Mammary epithelial cell (primary cell): ENCODE measurements at regions of chr19 and their contacts with region 1.

Region 1: GRCh38 chr19:47210689-47211316 is 20.2 kb downstream of the BBC3 start:
- DNase-seq: peak; percentile 54
- H3K4me3 ChIP-seq: no peak overlapping the region
- H3K27ac ChIP-seq: peak overlapping the region; percentile 45
- H3K4me1 ChIP-seq: no peaks in the 10 kb centered on the region
- H3K27me3 ChIP-seq: no peaks in the 10 kb centered on the region
- CTCF ChIP-seq: peak; percentile 82 to 84

Region 2: GRCh38 chr19:47081111-47081510 is 129.7 kb before region 1 on chr19:
- CTCF ChIA-PET with region 1: no interaction called
- dilution Hi-C with region 1: loop called (anchors 5 kb)
- in situ Hi-C with region 1: no loop called
- intact Hi-C with region 1: no loop called
- DNase-seq: no peak
- H3K4me3 ChIP-seq: no peak overlapping the region
- H3K27ac ChIP-seq: no peak overlapping the region
- H3K4me1 ChIP-seq: peaks cover 2% of the 10 kb centered on the region
- H3K27me3 ChIP-seq: no peaks in the 10 kb centered on the region
- CTCF ChIP-seq: no peak

Region 3: DNA sequence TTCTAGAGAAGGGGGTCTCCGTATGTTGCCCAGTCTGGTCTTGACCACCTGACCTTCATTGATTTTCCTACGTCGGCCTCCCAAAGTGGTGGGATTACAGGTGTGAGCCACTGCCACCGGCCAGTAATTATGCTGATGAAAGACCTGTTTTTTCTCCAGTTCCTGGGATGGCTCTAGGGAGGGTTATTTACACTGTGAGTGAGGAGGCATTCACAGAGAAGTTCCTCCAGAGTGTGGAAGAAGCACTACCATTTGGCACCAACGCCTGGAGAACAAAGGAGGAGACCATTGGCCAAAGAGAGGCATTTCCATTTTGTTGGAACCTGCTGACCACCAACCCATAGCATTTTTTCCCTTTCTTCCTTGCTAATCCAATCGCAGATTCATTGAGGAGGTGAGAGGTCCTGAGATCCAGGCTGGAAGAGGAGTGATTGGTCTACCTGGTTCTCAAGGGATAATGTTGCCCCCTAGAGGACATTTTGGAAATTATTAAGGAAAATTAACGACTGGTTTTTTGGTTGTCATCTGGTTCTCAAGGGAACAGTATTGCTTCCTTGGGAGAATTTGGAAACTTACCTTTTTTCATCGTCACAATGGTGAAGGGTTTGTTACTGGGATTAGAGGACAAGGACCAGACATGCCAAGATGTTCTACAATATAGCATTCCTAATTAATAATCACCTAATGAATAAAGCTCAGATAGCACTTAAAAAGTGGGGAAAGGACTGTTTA is 85.7 kb before region 1 on chr19:
- CTCF ChIA-PET with region 1: interaction called, 15 read pairs
- dilution Hi-C with region 1: no loop called
- in situ Hi-C with region 1: no loop called
- intact Hi-C with region 1: no loop called
- DNase-seq: peak; percentile 55
- H3K4me3 ChIP-seq: no peak overlapping the region
- H3K27ac ChIP-seq: no peak overlapping the region
- H3K4me1 ChIP-seq: peaks cover 12% of the 10 kb centered on the region
- H3K27me3 ChIP-seq: no peaks in the 10 kb centered on the region
- CTCF ChIP-seq: peak; percentile 52 to 62

Region 4: DNA sequence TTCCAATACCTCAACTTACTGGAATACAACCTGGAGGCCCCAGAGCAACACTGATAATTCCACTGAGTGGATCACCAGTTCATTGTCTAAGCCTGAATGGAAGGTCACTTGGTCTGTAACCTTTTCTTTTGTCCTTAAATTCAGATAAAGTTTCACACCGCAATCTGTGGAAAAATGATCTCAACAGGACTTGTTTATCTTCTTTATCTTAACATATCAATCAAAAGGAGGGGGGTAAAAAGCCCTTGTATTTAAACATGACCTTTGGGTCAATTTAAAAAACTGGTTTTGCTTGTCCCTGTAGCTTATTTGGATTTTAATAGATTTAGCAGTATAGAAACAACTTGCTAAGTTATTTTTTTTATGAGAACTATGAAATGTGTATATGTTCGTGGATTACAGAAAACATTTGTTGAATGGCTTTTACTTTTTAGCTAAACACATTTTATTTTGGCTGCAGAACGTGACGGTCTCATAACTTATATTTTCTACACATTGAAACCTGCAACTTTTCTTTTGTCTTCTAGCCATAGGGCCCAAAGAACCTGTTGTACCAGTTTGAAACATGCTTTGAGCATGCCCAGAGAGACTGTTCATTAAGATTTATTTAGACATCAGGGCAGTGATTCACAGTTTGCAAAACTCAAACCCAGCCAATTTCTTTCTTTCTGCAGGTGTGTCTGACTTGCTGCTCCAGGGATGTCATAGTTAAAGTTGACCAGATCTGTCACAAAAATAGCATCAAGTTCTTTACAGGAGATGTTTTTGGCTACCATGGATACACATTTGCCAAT is 58.4 kb before region 1 on chr19:
- CTCF ChIA-PET with region 1: interaction called, 39 read pairs
- dilution Hi-C with region 1: no loop called
- in situ Hi-C with region 1: no loop called
- intact Hi-C with region 1: loop called (anchors 1 kb)
- DNase-seq: peak; percentile 89
- H3K4me3 ChIP-seq: no peak overlapping the region
- H3K27ac ChIP-seq: peak overlapping the region; percentile 11
- H3K4me1 ChIP-seq: peaks cover 28% of the 10 kb centered on the region
- H3K27me3 ChIP-seq: no peaks in the 10 kb centered on the region
- CTCF ChIP-seq: no peak

Region 5: GRCh38 chr19:47168065-47168464 is 42.7 kb before region 1 on chr19:
- CTCF ChIA-PET with region 1: no interaction called
- dilution Hi-C with region 1: loop called (anchors 5 kb)
- in situ Hi-C with region 1: no loop called
- intact Hi-C with region 1: no loop called
- DNase-seq: no peak
- H3K4me3 ChIP-seq: no peak overlapping the region
- H3K27ac ChIP-seq: no peak overlapping the region
- H3K4me1 ChIP-seq: no peaks in the 10 kb centered on the region
- H3K27me3 ChIP-seq: no peaks in the 10 kb centered on the region
- CTCF ChIP-seq: no peak

Region 6: DNA sequence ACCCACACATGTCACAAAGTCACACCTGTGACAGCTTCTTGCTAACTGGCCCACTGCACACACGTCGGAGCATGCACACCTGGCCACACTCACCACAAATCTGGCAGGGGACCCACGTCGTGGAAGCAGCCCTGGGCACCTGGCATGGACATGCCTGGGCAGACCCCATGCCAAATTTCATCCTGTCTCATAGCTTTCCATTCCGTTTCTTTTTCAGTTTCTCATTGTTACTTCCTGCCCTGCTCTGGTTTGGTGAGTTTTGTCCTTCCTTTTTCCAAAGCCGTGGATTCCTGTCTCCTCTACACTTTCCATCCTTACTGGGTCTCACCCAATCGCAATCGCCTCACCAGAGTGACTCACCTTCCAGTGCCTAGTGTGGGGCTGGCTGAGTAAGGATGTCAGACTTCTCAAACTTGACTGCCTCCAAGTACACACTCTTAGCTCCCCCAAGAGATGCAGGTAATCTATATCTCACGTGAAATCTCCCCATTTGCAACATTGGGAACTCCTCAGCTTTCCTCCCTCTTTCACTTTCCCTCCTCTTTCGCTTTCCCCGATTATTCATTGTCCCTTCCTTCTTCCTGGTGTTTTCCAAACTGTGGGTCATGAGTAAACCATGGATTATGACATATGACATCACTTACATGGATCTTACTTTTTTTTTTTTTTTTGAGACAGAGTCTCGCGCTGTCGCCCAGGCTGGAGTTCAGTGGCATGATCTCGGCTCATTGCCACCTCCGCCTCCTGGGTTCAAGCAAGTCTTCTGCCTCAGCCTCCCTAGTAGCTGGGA is 21.8 kb after region 1 on chr19:
- CTCF ChIA-PET with region 1: no interaction called
- dilution Hi-C with region 1: no loop called
- in situ Hi-C with region 1: no loop called
- intact Hi-C with region 1: loop called (anchors 2 kb)
- DNase-seq: peak; percentile 92
- H3K4me3 ChIP-seq: peak overlapping the region; percentile 43 to 56 (median 53)
- H3K27ac ChIP-seq: peak overlapping the region; percentile 90
- H3K4me1 ChIP-seq: peaks cover 43% of the 10 kb centered on the region
- H3K27me3 ChIP-seq: no peaks in the 10 kb centered on the region
- CTCF ChIP-seq: no peak

Region 7: DNA sequence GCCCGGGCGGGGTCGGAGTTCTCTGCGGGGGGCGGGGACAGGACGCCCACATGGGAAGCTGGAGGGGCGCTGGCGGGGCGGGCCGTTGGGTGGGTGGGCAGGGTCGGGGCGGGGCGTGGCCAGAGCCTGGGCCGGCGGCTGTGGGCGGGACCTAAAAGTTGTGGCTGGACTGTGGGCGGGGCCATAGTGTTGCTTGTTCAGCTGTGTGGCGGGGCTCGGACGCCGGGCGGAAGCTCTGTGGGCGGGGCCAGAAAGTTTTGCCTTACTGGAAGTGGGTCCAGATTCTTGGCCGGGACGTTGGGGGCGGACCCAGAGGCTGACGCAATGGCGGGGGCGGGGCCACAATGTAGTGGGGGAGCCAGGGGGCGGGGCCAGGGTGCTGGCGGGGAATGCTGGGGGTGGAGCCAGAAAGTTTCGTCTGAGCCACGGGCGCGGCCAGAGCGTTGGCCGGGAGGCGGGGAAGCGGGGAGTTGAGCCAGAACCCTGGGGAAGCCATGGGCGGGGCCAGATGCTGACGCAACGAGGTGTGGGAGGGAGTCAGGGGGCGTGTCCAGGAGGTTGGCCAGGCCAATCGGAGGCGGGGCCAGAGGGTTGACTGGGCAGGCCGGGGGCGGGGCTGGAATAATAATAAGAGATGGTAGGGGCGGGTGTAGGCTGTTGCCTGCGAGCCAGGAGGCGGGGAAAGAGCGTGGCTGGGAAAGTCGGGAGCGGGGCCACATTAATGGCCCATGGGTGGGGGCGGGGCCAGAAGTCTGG is 46.1 kb after region 1 on chr19:
- CTCF ChIA-PET with region 1: no interaction called
- dilution Hi-C with region 1: loop called (anchors 5 kb)
- in situ Hi-C with region 1: no loop called
- intact Hi-C with region 1: no loop called
- DNase-seq: peak; percentile 97
- H3K4me3 ChIP-seq: peak overlapping the region in 2 of 3 experiments; percentile 60 to 81
- H3K27ac ChIP-seq: peak overlapping the region; percentile 92
- H3K4me1 ChIP-seq: peaks cover 21% of the 10 kb centered on the region
- H3K27me3 ChIP-seq: no peaks in the 10 kb centered on the region
- CTCF ChIP-seq: no peak